Vagina (tissue), 2 donors: ENCODE measurements at regions of chr6 and their contacts with region 1.

Region 1: GRCh38 chr6:154932515-154933027 is 62.5 kb upstream of the TIAM2 start:
- DNase-seq: no peak
- H3K4me3 ChIP-seq: no peak overlapping the region
- H3K27ac ChIP-seq: no peak overlapping the region
- H3K4me1 ChIP-seq: peaks cover 16% of the 10 kb centered on the region
- H3K27me3 ChIP-seq: no peaks in the 10 kb centered on the region
- CTCF ChIP-seq: no peak
- POLR2A ChIP-seq: no peak

Region 2: GRCh38 chr6:154893917-154894316 is 38.7 kb before region 1 on chr6:
- intact Hi-C with region 1: no loop called
- DNase-seq: no peak
- H3K4me3 ChIP-seq: no peak overlapping the region
- H3K27ac ChIP-seq: no peak overlapping the region
- H3K4me1 ChIP-seq: peaks cover 3% of the 10 kb centered on the region
- H3K27me3 ChIP-seq: no peaks in the 10 kb centered on the region
- CTCF ChIP-seq: no peak
- POLR2A ChIP-seq: no peak

Region 3: DNA sequence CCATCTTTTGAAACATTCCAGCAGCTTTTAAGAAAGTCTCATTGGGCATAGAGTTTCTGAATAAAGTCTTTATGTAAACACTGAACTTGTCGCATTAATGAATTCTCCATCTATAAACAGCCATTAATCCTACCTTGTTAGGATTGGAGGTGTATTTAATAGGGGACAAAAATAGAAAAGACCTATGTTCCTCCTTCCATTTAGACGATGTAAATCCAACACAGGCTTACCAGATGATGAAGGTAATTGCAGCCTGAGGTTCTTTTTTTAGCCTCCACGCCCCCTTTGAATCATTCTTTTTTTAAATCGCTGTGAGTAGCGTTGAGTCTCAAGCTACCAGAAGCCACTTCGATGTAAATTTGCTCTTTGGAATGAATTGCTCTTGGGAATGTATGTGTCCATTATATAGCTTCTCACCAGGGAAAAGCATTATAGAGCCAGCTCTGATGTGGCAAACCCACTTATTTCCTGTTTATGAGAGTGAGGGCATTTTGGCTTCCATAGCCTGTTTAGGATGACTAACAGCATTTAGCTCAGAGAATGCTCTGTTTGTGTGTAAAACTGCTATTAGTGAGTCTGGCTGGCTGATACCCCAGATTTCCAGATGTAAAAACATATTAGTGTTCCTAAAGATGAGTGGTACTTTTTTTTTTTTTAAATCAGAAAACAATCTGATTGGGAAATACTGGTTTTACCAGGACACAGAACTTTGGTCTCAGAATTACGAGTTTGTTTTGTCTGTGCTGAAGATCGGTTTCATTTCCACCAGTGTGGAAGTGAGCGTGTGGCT is 256.3 kb after region 1 on chr6:
- intact Hi-C with region 1: loop called (anchors 10 kb)
- DNase-seq: no peak
- H3K4me3 ChIP-seq: peak overlapping the region in 1 of 2 donors; percentile 24
- H3K27ac ChIP-seq: peak overlapping the region; percentile 77
- H3K4me1 ChIP-seq: peaks cover 39% of the 10 kb centered on the region
- H3K27me3 ChIP-seq: no peaks in the 10 kb centered on the region
- CTCF ChIP-seq: no peak
- POLR2A ChIP-seq: no peak